Right cardiac atrium (tissue), 5 donors: ENCODE measurements at regions of chr11 and their contacts with region 1.

Region 1: DNA sequence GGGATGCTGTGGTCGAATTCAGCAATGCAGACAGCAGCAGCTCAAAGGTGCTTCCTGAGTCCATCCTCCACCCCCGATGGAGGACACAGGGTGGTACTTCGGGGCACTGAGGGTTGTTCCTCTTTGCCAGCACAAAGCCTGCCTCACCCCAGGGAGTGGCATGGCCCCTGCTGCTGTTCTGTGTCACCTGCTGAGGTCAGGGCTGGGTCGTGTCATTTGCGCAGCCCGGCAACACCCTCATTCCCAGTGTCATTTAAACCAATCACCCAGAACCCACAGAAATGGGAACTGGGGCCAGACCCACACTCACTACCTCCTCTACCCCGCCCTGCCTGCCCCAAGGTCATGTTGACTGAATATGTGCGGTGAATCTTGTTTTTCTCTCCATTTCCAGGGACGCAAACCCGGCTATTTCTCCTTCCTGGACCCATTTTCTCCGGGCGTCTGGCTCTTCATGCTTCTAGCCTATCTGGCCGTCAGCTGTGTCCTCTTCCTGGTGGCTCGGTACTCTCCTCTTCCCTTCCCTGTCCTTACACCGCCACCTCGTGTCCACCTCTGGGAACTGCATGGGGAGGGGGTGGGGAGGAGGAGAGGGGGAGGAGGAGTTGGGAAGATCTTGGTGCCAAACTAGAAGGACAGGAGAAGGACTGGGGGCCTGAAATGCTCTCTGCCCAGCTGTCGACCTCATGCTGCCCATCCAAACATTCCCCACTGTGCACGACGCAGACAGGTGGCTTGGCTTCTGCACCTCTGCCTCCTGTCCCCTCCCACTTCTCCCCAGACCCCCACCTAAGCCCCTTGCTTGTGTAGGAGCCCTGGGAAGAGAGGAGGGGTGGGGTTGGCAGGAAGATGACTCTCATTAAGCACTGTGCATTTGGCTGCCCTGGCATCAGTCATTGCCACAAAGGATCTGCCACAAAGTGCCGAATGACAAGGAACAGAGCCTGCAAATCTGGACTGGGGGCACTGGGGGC is 71.2 kb upstream of the TBCEL start:
- DNase-seq: peak; percentile 74 to 93 (median 89)
- ATAC-seq: peak; percentile 90
- H3K4me3 ChIP-seq: no peak overlapping the region
- H3K27ac ChIP-seq: no peak overlapping the region
- H3K4me1 ChIP-seq: peaks cover 3% of the 10 kb centered on the region
- H3K27me3 ChIP-seq: no peaks in the 10 kb centered on the region

Region 2: GRCh38 chr11:121112498-121113455 is 160.0 kb after region 1 on chr11:
- intact Hi-C with region 1: loop called in 3 of 4 experiments (anchors 10 kb)
- DNase-seq: peak; percentile 74 to 87 (median 79)
- ATAC-seq: peak; percentile 88 to 91
- H3K4me3 ChIP-seq: no peak overlapping the region
- H3K27ac ChIP-seq: no peak overlapping the region
- H3K4me1 ChIP-seq: no peaks in the 10 kb centered on the region
- H3K27me3 ChIP-seq: no peaks in the 10 kb centered on the region